ENCODE measurements at regions of chr19 and their contacts with region 1.

Region 1: GRCh38 chr19:57192993-57193392 is 1.7 kb downstream of the ZNF264 start:
- DNase-seq: no peak
- ATAC-seq: no peak
- H3K4me3 ChIP-seq: peak overlapping the region; percentile 91
- H3K27ac ChIP-seq: no peak overlapping the region
- H3K4me1 ChIP-seq: peaks cover 10% of the 10 kb centered on the region
- H3K27me3 ChIP-seq: no peaks in the 10 kb centered on the region
- CTCF ChIP-seq: no peak

Region 2: DNA sequence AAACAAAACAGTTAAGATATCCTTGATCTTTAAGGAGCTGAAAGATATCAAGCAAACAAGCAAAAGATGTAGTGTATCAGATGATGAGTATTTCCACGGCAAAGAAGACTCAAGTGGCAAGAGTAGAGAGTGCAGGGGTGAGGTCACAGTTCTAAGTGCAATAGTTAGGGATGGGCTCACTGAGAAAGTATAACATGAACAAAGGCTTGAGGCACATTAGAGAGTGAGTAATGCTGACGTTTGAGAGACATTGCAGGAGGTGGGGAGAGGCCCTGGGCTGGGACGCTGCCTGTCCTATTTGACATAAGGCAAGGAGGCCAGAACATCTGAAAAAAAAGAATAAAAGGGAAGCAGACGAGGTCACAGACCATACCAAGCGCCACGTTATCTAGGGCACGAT is 27.1 kb before region 1 on chr19:
- intact Hi-C with region 1: no loop called
- DNase-seq: no peak
- ATAC-seq: no peak
- H3K4me3 ChIP-seq: no peak overlapping the region
- H3K27ac ChIP-seq: no peak overlapping the region
- H3K4me1 ChIP-seq: no peaks in the 10 kb centered on the region
- H3K27me3 ChIP-seq: no peaks in the 10 kb centered on the region
- CTCF ChIP-seq: no peak

Region 3: DNA sequence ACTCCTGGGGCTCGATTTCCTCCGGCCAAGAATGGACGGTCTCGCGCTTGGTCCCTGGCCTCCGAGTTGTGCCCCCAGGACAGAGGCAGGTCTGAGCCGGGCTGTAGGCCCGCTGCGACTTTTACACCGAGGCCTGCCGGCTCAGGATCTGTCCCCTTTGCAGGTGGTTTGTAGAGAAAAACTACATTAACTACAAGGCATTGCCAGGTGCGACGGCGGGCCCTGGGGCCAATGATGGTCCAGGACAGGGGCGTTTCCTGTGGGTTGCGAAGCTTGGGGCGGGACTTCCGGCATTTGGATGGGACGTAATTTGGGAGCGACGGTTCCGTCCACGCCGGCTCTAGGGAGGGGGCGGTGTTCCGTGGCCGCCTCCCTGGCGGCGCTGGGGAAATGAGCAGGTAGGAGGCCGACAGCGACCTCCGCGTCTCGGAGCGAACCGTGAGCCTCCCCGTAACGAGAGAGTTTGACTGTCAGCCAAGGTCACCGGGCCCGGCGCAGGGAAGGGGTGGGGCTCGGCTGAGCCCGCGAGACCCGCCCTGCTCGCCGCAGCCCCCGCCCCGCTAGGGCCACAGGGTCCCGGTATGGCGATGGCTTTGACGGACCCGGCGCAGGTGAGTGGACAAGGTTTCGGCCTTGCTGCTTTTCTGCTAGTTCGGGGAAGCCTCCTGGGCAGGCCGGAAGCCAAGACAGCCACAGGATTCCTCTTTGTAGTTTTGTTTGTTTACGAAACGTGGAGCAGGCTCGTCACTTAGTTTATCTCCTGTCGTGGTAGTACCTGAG is 47.5 kb after region 1 on chr19 and contains the start of gene ZNF805:
- intact Hi-C with region 1: loop called in 1 of 2 experiments (anchors 1 kb)
- DNase-seq: peak; percentile 97 to 99
- ATAC-seq: peak; percentile 99
- H3K4me3 ChIP-seq: peak within 1 kb of the TSS; percentile 97
- H3K27ac ChIP-seq: peak within 1 kb of the TSS; percentile 97
- H3K4me1 ChIP-seq: peaks cover 20% of the 10 kb centered on the region
- H3K27me3 ChIP-seq: no peaks in the 10 kb centered on the region
- CTCF ChIP-seq: peak; percentile 18
- total RNA-seq, gene ZNF805: 10.3 to 16.4 (median 12.7) TPM